Psoas muscle (tissue), 8 donors: ENCODE measurements at regions of chr16 and their contacts with region 1.

Region 1: GRCh38 chr16:66036793-66037715 is 329.4 kb upstream of the CDH5 start:
- DNase-seq: peak; percentile 42 to 70
- ATAC-seq: peak; percentile 83 to 91 (median 88)
- H3K4me3 ChIP-seq: no peak overlapping the region
- H3K27ac ChIP-seq: peak overlapping the region; percentile 73
- H3K4me1 ChIP-seq: peaks cover 21% of the 10 kb centered on the region
- H3K27me3 ChIP-seq: no peaks in the 10 kb centered on the region
- CTCF ChIP-seq: no peak

Region 2: GRCh38 chr16:66020642-66021041 is 16.4 kb before region 1 on chr16:
- intact Hi-C with region 1: no loop called
- DNase-seq: no peak
- ATAC-seq: no peak
- H3K4me3 ChIP-seq: no peak overlapping the region
- H3K27ac ChIP-seq: no peak overlapping the region
- H3K4me1 ChIP-seq: no peaks in the 10 kb centered on the region
- H3K27me3 ChIP-seq: peaks cover 0 to 3% (median 0%) of the 10 kb centered on the region in 3 donors
- CTCF ChIP-seq: no peak

Region 3: DNA sequence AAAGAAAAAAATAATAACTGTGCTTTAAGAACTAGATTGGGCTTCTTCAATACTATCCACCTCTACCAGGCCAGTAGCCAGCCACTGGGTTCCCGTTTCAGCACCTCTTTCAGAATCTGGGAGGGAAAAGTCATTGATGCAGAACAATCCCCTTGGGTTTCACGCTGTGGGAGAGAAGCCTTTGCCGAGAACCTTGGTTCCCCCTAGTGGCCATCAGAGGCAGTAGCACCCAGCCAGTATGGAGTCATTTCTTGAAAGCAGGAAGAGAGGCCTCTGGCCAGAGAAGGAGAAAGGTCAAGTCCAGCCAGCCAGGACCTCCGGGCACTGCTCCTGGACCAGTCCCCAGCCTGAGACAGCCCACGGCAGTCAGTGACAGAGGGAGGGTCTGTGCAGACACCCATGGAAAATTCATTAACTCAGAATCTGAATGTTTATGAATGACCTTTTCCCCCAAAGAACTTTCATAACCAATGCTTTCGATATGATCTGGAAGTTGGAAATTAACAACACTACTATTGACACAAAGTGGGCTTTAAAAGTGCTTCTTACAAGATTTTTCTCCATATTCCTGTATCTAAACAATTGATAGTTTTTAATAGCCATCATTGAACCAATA is 278.3 kb after region 1 on chr16:
- intact Hi-C with region 1: loop called in 1 of 2 experiments (anchors 10 kb)
- DNase-seq: peak in 1 of 2 donors; percentile 34
- ATAC-seq: peak; percentile 80 to 87 (median 86)
- H3K4me3 ChIP-seq: no peak overlapping the region
- H3K27ac ChIP-seq: no peak overlapping the region
- H3K4me1 ChIP-seq: no peaks in the 10 kb centered on the region
- H3K27me3 ChIP-seq: peaks cover 0 to 4% (median 0%) of the 10 kb centered on the region in 3 donors
- CTCF ChIP-seq: peak; percentile 91